ENCODE measurements at regions of chr3 and their contacts with region 1.

Region 1: DNA sequence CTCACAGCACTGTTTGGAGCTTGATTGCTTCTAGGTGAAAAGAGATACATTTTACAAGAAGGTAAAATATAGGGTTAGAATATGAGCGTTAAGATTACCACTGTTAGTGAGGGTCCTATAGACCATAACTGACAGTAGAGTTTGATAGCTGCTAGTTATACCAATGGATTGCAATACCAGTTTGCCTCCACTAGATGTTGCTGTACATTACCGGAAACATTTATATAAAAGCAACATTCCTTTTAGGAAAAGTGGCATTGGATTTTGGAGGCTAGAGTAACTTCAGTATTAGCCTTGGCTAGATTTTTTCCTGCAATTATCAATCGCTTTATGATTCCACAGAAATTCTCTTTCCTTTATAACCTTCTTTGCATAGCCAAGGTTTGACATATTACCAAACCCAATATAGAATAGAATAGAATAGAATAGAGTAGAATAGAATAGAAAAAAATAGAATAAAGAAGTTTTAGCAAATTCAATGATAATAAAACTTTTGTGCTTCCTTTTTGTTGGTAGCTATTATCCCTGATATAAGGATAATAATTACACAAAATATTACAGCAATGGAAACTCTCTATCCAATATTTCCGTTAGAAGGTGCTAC is 1093.6 kb upstream of the ALCAM start:
- DNase-seq: no peak
- ATAC-seq: no peak
- H3K4me3 ChIP-seq: no peak overlapping the region
- H3K27ac ChIP-seq: no peak overlapping the region
- H3K4me1 ChIP-seq: no peaks in the 10 kb centered on the region
- H3K27me3 ChIP-seq: no peaks in the 10 kb centered on the region
- CTCF ChIP-seq: peak; percentile 42 to 78 (median 62)
- POLR2A ChIP-seq: no peak

Region 2: GRCh38 chr3:104460477-104461406 is 187.6 kb after region 1 on chr3:
- intact Hi-C with region 1: loop called in 2 of 10 experiments (anchors 2 to 10 kb)
- DNase-seq: no peak
- ATAC-seq: no peak
- H3K4me3 ChIP-seq: no peak overlapping the region
- H3K27ac ChIP-seq: no peak overlapping the region
- H3K4me1 ChIP-seq: peaks cover 0 to 13% (median 1%) of the 10 kb centered on the region in 12 donors
- H3K27me3 ChIP-seq: no peaks in the 10 kb centered on the region
- CTCF ChIP-seq: peak in 7 of 12 donors; percentile 7 to 41 (median 30)
- POLR2A ChIP-seq: no peak

Region 3: GRCh38 chr3:105366326-105367062 is 1093.3 kb after region 1 on chr3 and contains the start of gene ALCAM:
- intact Hi-C with region 1: loop called in 5 of 10 experiments (anchors 5 to 10 kb)
- DNase-seq: peak; percentile 86 to 94 (median 90)
- ATAC-seq: peak; percentile 88 to 98 (median 96)
- H3K4me3 ChIP-seq: peak within 1 kb of the TSS; percentile 25 to 72 (median 62)
- H3K27ac ChIP-seq: peak within 1 kb of the TSS in 6 of 12 donors; percentile 17 to 73 (median 38)
- H3K4me1 ChIP-seq: peaks cover 0 to 43% (median 21%) of the 10 kb centered on the region in 12 donors
- H3K27me3 ChIP-seq: no peaks in the 10 kb centered on the region
- CTCF ChIP-seq: peak in 10 of 12 donors; percentile 15 to 59 (median 36)
- POLR2A ChIP-seq: no peak
- total RNA-seq, gene ALCAM: 2.3 to 19.9 (median 5.5) TPM

Region 4: DNA sequence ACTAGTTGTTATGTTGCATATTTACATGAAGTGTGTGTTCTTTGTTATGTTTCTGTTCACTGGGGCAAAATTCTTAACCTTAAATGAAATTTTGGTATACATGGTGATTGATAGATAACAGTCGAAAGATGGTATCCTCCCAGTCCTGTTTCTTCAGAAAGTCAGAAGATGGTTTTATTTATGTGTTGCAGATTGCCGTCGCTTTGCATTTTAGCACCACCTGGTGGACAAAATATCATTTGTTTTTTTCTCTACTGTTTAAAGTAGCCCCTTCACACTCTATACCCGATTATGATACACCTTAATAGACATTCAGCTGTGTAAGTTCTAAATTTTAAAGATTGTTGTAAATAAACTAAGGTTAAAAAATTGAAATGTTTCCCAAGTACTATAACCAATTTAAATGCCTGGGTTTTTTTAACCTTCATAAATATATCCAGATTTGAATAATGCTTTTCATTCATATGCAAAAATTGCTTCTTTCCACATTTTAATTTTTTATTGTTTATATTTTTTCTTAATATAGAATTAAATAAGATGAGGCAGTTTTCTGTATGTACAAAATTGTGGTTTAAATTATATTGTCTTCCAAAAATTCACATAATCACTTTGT is 1245.8 kb after region 1 on chr3:
- intact Hi-C with region 1: loop called in 5 of 10 experiments (anchors 5 to 10 kb)
- DNase-seq: no peak
- ATAC-seq: peak in 3 of 4 donors; percentile 50 to 58 (median 55)
- H3K4me3 ChIP-seq: no peak overlapping the region
- H3K27ac ChIP-seq: no peak overlapping the region
- H3K4me1 ChIP-seq: no peaks in the 10 kb centered on the region
- H3K27me3 ChIP-seq: no peaks in the 10 kb centered on the region
- CTCF ChIP-seq: peak; percentile 40 to 78 (median 62)
- POLR2A ChIP-seq: no peak

Region 5: GRCh38 chr3:105527949-105528348 is 1254.8 kb after region 1 on chr3:
- intact Hi-C with region 1: loop called in 1 of 10 experiments (anchors 10 kb)
- DNase-seq: no peak
- ATAC-seq: no peak
- H3K4me3 ChIP-seq: no peak overlapping the region
- H3K27ac ChIP-seq: no peak overlapping the region
- H3K4me1 ChIP-seq: no peaks in the 10 kb centered on the region
- H3K27me3 ChIP-seq: no peaks in the 10 kb centered on the region
- CTCF ChIP-seq: no peak
- POLR2A ChIP-seq: no peak

Measured in heart left ventricle (tissue), 16 donors.